Gastrocnemius medialis (tissue), 4 donors: ENCODE measurements at regions of chr22 and their contacts with region 1.

Region 1: DNA sequence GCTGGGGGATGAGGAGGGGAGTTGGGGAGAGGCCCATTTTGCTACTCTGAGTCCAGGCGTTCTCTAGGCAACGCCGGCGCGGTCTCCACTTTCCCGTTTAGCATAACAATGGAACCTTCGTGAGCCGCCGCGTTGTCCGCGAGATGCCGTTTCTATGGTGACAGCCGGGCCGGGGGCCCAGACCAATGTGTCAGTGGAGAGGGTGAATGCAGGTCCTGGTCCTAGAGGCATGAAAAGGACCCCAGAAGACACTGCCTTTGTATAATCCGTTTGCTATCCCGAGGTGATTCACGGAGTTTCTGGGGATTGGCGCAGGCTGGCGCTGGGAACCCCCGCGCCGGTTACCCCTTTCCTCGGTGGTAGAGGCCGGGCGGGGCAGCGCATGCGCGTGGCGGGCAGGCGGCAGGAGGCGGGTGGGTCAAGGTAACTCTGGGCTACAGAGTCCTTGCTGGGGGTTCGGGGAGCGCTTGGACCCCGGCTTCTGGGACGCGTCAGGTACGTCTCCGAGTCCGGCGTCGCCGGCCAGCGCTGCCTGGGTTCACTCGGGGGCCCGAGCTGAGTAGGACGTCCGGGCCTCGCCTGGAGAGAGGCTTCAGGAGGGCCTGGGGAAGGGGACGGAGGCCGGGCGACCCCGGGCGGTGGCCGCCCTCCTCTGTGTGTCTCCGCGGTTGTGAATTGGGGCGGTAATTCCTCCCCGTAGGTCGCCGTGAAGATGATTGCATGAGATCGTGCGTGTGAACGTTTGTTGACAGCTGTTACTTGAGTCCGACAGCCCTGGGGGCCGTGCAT is at the starts of genes CBY1 and FAM227A:
- DNase-seq: peak; percentile 64 to 72
- ATAC-seq: peak; percentile 93 to 95
- H3K4me3 ChIP-seq: peak within 1 kb of the TSS; percentile 79 to 99 (median 92)
- H3K27ac ChIP-seq: peak within 1 kb of the TSS; percentile 87 to 98 (median 92)
- H3K4me1 ChIP-seq: peaks cover 7 to 18% of the 10 kb centered on the region in 2 donors
- H3K27me3 ChIP-seq: no peaks in the 10 kb centered on the region
- CTCF ChIP-seq: no peak
- POLR2A ChIP-seq: peak; percentile 72 to 76
- total RNA-seq, gene CBY1: 8.0 to 15.7 (median 12.6) TPM
- total RNA-seq, gene FAM227A: 0.02 TPM in 1 of 4 donors, not detected in the others

Region 2: DNA sequence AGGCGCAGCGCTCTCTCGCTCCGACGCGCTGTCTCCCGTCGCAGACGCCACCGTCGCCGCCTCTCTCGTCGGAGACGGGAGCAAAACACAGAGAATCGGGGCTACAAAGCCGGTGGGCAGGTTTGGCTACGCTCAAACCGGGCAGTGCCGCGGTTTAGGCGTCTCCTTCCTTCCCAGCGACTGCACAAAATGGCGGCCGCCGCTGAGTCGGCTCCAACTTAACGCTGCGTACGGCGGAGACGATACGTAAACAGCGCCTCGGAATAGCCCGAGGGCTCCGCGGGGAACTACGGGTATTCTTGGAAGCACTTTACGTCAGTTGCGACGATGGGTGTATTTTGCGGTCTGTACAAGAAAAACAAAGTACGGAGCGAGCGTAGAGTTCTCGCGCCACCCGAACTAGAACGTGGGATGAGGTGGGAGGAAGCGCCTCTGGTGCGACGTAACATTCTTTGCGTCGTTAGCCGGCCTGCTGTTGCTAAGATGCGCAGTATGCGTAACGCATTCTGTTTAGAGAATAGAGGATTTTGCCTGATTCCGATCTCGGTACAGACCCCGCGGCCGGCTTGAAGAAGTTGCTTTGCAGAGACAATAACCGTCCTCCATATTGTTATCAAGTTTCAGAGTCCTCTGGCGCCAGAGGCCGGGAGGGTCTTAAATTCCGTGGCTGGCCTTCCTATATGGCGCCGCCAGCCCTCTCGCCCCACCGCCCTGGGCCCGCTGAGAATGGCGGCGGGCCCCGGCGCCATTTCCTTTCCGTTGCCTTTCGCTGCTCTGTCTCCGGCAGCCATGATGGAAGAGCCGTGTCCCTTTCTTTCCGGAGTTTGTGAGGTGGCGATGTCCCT is 150.1 kb before region 1 on chr22 and contains the start of gene DDX17:
- in situ Hi-C with region 1: no loop called
- intact Hi-C with region 1: loop called (anchors 2 kb)
- DNase-seq: peak; percentile 91 to 94
- ATAC-seq: peak; percentile 91 to 92
- H3K4me3 ChIP-seq: peak within 1 kb of the TSS; percentile 72 to 95 (median 85)
- H3K27ac ChIP-seq: peak within 1 kb of the TSS; percentile 94 to 100 (median 98)
- H3K4me1 ChIP-seq: peaks cover 34 to 36% of the 10 kb centered on the region in 2 donors
- H3K27me3 ChIP-seq: no peaks in the 10 kb centered on the region
- CTCF ChIP-seq: no peak
- POLR2A ChIP-seq: peak; percentile 53 to 84
- total RNA-seq, gene DDX17: 108 to 329 (median 206) TPM

Region 3: GRCh38 chr22:38696606-38697424 is 40.4 kb after region 1 on chr22:
- in situ Hi-C with region 1: no loop called
- intact Hi-C with region 1: no loop called
- DNase-seq: no peak
- ATAC-seq: no peak
- H3K4me3 ChIP-seq: no peak overlapping the region
- H3K27ac ChIP-seq: peak overlapping the region; percentile 57 to 97 (median 96)
- H3K4me1 ChIP-seq: peaks cover 33 to 35% of the 10 kb centered on the region in 2 donors
- H3K27me3 ChIP-seq: no peaks in the 10 kb centered on the region
- CTCF ChIP-seq: no peak
- POLR2A ChIP-seq: no peak